ENCODE measurements at regions of chr3 and their contacts with region 1.

Region 1: GRCh38 chr3:133570139-133570936 is 3.1 kb upstream of the CDV3 start:
- DNase-seq: no peak
- H3K4me3 ChIP-seq: no peak overlapping the region
- CTCF ChIP-seq: no peak

Region 2: DNA sequence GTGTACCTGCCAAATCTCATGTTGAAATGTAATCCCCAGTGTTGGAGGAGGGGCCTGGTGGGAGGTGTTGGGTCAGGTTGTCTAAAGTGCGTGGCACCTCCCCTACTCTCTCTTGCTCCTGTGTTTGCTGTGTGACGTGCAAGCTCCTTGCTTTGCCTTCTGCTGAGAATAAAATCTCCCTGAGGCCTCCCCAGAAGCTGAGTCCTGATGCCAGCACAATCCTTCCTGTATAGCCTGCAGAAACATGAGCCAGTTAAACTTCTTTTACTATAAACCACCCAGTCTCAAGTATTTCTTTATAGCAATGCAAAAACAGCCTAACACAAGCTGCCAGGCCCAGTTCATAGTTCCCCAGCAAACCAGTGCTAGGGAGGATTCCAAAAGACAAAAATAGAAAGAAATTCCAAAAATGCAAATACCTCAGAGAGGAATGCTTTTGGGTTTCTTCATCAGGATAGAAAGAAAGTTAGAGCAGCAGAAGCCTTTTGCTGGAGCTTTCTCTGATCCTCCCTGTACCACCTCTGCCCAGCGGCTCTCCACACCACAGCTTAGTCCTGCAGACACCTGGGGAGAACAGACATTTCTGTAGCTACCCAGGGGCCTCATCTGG is 22.8 kb before region 1 on chr3:
- CTCF ChIA-PET with region 1: interaction called, 13 read pairs
- POLR2A ChIA-PET with region 1: interaction called, 7 read pairs
- DNase-seq: no peak
- H3K4me3 ChIP-seq: no peak overlapping the region
- CTCF ChIP-seq: no peak